ENCODE measurements at regions of chr10 and their contacts with region 1.

Region 1: DNA sequence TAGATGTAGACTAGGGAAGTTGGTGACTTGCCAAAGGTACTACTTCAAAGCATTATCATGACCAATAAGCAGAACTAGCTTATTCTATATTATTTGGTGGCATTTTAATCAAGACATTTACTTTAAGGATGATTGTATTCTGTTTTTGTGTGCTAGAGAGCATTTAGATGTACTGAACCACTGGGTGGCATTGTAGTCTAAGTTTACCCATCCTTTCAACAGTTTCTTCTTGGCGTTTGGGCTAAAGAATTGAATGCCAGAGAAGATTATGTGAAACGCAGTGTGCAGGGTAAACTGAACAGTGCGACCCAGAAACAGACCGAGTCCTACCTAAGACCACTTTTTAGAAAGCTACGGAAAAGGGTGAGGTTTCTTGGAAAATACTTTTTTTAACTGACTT is 26.8 kb downstream of the PRPF18 start:
- DNase-seq: no peak
- H3K4me3 Mint-ChIP-seq: no peak overlapping the region
- H3K27ac Mint-ChIP-seq: no peak overlapping the region
- H3K4me1 Mint-ChIP-seq: no peaks in the 10 kb centered on the region
- H3K27me3 Mint-ChIP-seq: no peaks in the 10 kb centered on the region

Region 2: DNA sequence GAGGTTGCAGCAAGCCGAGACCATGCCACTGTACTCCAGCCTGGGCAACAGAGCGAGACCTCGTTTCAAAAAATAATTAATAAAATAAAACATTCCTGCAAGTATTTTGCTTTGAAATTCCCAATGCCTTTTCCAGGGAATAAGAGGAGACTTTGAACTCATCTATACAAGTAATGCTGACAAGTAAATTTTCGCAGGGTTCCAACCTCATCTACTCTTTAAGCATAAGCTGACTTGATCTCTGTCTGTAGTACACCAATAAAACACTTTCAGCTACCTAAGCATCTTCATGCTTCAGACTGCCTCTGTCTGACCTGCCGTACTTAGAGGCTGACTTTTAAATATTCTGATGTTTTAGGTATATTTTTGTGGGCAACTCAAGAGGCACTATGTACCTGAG is 71.0 kb before region 1 on chr10:
- CTCF ChIA-PET with region 1: no interaction called
- intact Hi-C with region 1: no loop called
- DNase-seq: no peak
- H3K4me3 Mint-ChIP-seq: no peak overlapping the region
- H3K27ac Mint-ChIP-seq: no peak overlapping the region
- H3K4me1 Mint-ChIP-seq: no peaks in the 10 kb centered on the region
- H3K27me3 Mint-ChIP-seq: peaks cover 39% of the 10 kb centered on the region

Region 3: GRCh38 chr10:13776861-13777311 is 163.4 kb after region 1 on chr10:
- CTCF ChIA-PET with region 1: interaction called, 3 read pairs
- intact Hi-C with region 1: loop called (anchors 1 kb)
- DNase-seq: no peak
- H3K4me3 Mint-ChIP-seq: no peak overlapping the region
- H3K27ac Mint-ChIP-seq: no peak overlapping the region
- H3K4me1 Mint-ChIP-seq: no peaks in the 10 kb centered on the region
- H3K27me3 Mint-ChIP-seq: no peaks in the 10 kb centered on the region